Adrenal gland (tissue), 19 donors: ENCODE measurements at regions of chr6 and their contacts with region 1.

Region 1: GRCh38 chr6:41008011-41008410 is 31.0 kb downstream of the UNC5CL start:
- DNase-seq: no peak
- H3K4me3 ChIP-seq: no peak overlapping the region
- H3K27ac ChIP-seq: no peak overlapping the region
- H3K4me1 ChIP-seq: no peaks in the 10 kb centered on the region
- H3K27me3 ChIP-seq: no peaks in the 10 kb centered on the region
- CTCF ChIP-seq: no peak
- POLR2A ChIP-seq: no peak

Region 2: GRCh38 chr6:41066867-41067304 is 58.9 kb after region 1 on chr6:
- intact Hi-C with region 1: loop called in 1 of 2 experiments (anchors 5 kb)
- DNase-seq: peak; percentile 67 to 93 (median 85)
- H3K4me3 ChIP-seq: no peak overlapping the region
- H3K27ac ChIP-seq: no peak overlapping the region
- H3K4me1 ChIP-seq: peaks cover 8 to 11% of the 10 kb centered on the region in 2 donors
- H3K27me3 ChIP-seq: no peaks in the 10 kb centered on the region
- CTCF ChIP-seq: peak; percentile 74 to 94 (median 88)
- POLR2A ChIP-seq: no peak